Heart right ventricle (tissue), 16 donors: ENCODE measurements at regions of chr12 and their contacts with region 1.

Region 1: DNA sequence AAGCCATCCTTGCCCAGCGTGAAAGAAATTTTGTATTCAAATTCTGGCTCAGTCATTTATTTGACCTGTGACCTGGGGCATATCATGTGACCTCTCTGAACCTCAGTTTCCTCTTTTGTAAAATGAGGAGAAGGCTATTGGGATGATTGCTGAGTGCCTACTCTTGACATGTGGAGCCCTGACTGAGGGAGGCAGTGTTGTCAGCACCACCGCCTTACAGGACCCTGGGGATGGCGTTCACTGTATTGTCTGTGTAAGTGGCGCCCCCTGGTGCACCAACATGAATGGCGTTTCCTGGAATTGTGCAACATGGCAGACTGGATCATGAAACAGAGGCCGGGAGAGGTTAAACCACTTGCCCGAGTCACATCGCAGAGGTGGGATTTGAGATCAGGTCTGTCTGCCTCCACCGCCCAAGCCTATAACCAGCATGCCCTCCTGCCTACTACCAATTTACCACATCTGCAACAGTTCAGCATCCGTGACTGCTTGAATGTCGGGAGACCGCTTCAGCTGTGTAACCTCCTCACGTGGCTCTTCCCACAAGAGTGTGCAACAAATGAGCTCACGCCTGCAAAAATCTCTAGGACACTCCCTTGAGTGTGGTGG is 20.1 kb upstream of the CCDC63 start:
- DNase-seq: peak; percentile 86 to 87
- ATAC-seq: peak; percentile 92 to 97 (median 94)
- H3K4me3 ChIP-seq: peak overlapping the region in 4 of 10 donors; percentile 23 to 37 (median 30)
- H3K27ac ChIP-seq: no peak overlapping the region
- H3K4me1 ChIP-seq: peaks cover 0 to 6% (median 0%) of the 10 kb centered on the region in 9 donors
- H3K27me3 ChIP-seq: no peaks in the 10 kb centered on the region
- CTCF ChIP-seq: peak; percentile 60 to 87 (median 78)

Region 2: DNA sequence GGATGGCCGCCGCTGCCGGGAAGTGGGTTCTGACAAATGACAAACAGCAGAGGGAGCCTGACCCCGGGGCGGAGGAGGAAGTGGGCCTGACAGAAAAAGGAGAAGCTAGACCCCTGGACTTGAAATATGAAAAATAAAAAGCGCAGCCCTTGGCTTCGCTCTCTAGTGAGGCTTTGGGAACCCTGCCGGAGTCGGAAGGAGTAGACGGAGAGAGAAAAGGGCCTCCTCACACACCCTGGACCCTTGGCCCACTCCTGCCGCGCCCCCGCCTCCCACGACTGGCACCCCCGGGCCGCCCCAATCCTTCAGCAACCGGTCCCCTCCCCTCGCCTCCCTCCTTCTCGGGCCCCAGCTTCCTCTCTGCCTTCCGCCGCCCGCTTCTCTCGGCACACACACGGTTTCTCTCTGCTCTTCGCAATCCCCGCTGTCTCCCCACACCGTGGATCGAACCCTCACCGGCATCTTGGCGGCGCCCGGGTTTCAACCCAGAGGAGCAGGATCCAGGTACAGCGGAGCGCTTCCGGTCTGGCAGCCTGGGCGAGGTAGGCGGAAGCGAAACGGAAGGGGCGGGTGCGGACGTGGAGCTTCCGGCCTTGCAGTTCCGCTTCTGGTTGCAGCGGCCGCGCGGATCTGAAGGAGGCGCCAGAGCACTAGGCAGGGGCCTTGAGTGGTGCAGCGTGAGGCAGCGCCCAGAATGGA is 376.7 kb before region 1 on chr12 and contains the start of gene ARPC3:
- intact Hi-C with region 1: loop called in 3 of 10 experiments (anchors 2 to 10 kb)
- DNase-seq: peak; percentile 94 to 95
- ATAC-seq: peak; percentile 98 to 100 (median 99)
- H3K4me3 ChIP-seq: peak within 1 kb of the TSS; percentile 61 to 95 (median 81)
- H3K27ac ChIP-seq: peak within 1 kb of the TSS; percentile 80 to 99 (median 94)
- H3K4me1 ChIP-seq: peaks cover 0 to 49% (median 22%) of the 10 kb centered on the region in 9 donors
- H3K27me3 ChIP-seq: no peaks in the 10 kb centered on the region
- CTCF ChIP-seq: peak; percentile 69 to 97 (median 88)
- total RNA-seq, gene ARPC3: 71.9 to 168 (median 82.6) TPM

Region 3: DNA sequence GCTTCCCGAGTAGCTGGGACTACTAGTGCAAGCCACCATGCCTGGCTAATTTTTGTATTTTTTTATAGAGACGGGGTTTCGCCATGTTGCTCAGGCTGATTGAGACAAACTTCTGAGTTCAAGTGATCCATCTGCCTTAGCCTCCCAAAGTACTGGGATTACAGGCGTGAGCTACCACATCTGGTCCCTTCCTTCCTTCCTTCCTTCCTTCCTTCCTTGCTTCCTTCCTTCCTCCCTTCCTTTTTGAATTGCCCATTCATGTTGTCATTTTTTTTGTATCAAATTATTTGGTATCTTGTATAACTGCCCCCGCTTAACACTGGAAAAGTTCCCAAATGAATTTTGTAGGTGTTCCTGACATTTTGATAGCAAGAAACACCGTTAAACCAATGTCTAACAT is 312.9 kb before region 1 on chr12:
- intact Hi-C with region 1: loop called in 6 of 10 experiments (anchors 5 to 10 kb)
- DNase-seq: no peak
- ATAC-seq: no peak
- H3K4me3 ChIP-seq: no peak overlapping the region
- H3K27ac ChIP-seq: no peak overlapping the region
- H3K4me1 ChIP-seq: peaks cover 0 to 5% (median 0%) of the 10 kb centered on the region in 9 donors
- H3K27me3 ChIP-seq: no peaks in the 10 kb centered on the region
- CTCF ChIP-seq: no peak

Region 4: DNA sequence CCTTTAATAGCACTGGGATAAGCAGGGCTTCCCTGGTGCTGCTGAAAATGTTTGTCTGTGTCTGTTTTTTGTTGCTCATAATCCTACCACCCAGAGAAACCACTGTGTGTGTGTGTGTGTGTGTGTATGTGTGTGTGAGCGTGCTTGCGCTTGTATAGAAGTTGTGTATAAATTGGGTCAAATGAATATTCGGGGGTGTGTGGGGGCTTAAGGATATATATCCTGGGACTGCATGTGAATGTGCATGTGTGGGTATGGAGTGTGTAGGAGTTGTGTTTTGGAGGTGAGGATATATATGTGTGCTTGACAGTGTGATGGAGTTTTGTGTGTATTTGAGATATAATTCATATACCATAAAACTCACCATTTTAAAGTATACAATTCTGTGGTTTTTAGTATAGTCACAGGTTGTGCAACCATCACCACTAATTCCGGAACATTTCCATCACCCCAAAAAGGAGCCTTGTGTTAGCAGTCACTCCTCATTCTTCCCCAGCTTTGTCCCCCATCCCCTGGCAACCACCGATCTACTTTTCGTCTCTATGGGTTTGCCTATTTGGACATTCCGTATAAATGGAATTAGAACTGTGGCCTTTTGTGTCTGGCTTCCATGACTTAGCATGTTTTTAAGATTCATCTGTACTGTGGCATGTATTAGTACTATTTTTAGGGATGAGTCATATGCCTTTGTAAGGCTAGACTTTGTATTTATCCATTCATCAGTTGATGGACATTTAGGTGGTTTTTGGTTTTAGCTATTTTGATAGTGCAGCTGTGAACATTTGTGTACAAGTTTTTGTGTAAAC is 187.2 kb before region 1 on chr12:
- intact Hi-C with region 1: loop called in 1 of 10 experiments (anchors 10 kb)
- DNase-seq: no peak
- ATAC-seq: peak in 6 of 8 donors; percentile 36 to 62 (median 59)
- H3K4me3 ChIP-seq: no peak overlapping the region
- H3K27ac ChIP-seq: peak overlapping the region in 8 of 10 donors; percentile 43 to 71 (median 60)
- H3K4me1 ChIP-seq: peaks cover 6 to 42% (median 21%) of the 10 kb centered on the region in 9 donors
- H3K27me3 ChIP-seq: no peaks in the 10 kb centered on the region
- CTCF ChIP-seq: no peak

Region 5: DNA sequence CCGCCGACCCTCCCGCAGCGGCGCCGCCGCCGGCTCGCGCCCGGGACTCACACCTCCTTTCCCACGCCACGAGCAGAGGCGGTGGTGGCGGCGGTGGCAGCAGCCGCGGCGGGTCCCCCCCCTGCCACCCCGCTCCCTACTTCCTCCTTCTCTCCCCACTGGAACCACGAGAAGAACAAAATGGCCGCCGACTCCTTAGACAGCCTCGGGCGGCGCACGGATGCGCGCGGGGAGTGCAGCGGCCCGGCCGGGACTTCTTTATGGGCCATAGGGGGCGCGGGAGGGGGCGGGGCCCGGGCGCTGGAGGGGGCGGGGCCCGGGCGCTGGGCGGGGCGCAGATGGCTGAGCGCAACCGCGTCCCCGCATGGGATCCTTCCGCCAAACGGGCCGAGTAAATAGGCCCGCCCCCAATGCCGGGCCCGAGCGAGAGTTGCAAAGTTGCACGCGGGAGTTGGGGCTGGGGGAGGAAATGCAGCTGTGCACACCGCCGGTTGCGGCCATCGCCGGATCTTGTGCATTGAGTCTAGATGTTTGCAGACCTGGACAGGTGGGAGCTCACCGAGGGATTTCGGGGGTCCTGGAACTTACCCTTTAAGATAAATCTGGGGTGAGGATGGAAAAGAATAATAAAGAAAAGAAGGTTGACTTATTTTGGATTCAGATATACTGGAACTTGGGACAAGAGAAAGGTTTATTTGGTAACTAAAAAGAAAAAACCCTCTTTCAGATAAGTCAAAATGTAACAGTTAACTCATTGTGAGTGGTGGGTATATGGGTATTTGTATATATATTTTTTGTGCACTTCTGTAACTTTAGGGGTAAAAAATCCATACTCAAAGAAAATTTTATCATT is 83.8 kb before region 1 on chr12 and contains the start of gene PPP1CC:
- intact Hi-C with region 1: loop called in 1 of 10 experiments (anchors 10 kb)
- DNase-seq: peak; percentile 93 to 94
- ATAC-seq: peak; percentile 94 to 97 (median 96)
- H3K4me3 ChIP-seq: peak within 1 kb of the TSS; percentile 71 to 99 (median 94)
- H3K27ac ChIP-seq: peak within 1 kb of the TSS; percentile 70 to 94 (median 92)
- H3K4me1 ChIP-seq: peaks cover 12 to 63% (median 55%) of the 10 kb centered on the region in 9 donors
- H3K27me3 ChIP-seq: no peaks in the 10 kb centered on the region
- CTCF ChIP-seq: peak in 2 of 9 donors; percentile 8 to 36
- total RNA-seq, gene PPP1CC: 116 to 248 (median 137) TPM